ENCODE measurements at regions of chr9 and their contacts with region 1.

Region 1: GRCh38 chr9:128927731-128928411 is 7.1 kb downstream of the PHYHD1 start:
- DNase-seq: peak; percentile 61
- ATAC-seq: peak; percentile 92
- H3K4me3 Mint-ChIP-seq: no peak overlapping the region
- H3K27ac Mint-ChIP-seq: no peak overlapping the region
- H3K4me1 Mint-ChIP-seq: peaks cover 2% of the 10 kb centered on the region
- H3K27me3 Mint-ChIP-seq: no peaks in the 10 kb centered on the region
- CTCF ChIP-seq: peak; percentile 95

Region 2: GRCh38 chr9:128786681-128787601 is 140.9 kb before region 1 on chr9 and contains the start of gene TBC1D13:
- CTCF ChIA-PET with region 1: interaction called, 14 read pairs
- POLR2A ChIA-PET with region 1: no interaction called
- intact Hi-C with region 1: no loop called
- DNase-seq: peak; percentile 90
- ATAC-seq: peak; percentile 97
- H3K4me3 Mint-ChIP-seq: peak within 1 kb of the TSS; percentile 93
- H3K27ac Mint-ChIP-seq: peak within 1 kb of the TSS; percentile 85
- H3K4me1 Mint-ChIP-seq: peaks cover 20% of the 10 kb centered on the region
- H3K27me3 Mint-ChIP-seq: no peaks in the 10 kb centered on the region
- CTCF ChIP-seq: no peak
- total RNA-seq, gene TBC1D13: 11.7 to 12.5 TPM

Region 3: GRCh38 chr9:128845155-128845931 is 82.5 kb before region 1 on chr9:
- CTCF ChIA-PET with region 1: interaction called, 17 read pairs
- POLR2A ChIA-PET with region 1: interaction called, 3 read pairs
- intact Hi-C with region 1: no loop called
- DNase-seq: no peak
- ATAC-seq: no peak
- H3K4me3 Mint-ChIP-seq: no peak overlapping the region
- H3K27ac Mint-ChIP-seq: no peak overlapping the region
- H3K4me1 Mint-ChIP-seq: no peaks in the 10 kb centered on the region
- H3K27me3 Mint-ChIP-seq: no peaks in the 10 kb centered on the region
- CTCF ChIP-seq: no peak

Region 4: DNA sequence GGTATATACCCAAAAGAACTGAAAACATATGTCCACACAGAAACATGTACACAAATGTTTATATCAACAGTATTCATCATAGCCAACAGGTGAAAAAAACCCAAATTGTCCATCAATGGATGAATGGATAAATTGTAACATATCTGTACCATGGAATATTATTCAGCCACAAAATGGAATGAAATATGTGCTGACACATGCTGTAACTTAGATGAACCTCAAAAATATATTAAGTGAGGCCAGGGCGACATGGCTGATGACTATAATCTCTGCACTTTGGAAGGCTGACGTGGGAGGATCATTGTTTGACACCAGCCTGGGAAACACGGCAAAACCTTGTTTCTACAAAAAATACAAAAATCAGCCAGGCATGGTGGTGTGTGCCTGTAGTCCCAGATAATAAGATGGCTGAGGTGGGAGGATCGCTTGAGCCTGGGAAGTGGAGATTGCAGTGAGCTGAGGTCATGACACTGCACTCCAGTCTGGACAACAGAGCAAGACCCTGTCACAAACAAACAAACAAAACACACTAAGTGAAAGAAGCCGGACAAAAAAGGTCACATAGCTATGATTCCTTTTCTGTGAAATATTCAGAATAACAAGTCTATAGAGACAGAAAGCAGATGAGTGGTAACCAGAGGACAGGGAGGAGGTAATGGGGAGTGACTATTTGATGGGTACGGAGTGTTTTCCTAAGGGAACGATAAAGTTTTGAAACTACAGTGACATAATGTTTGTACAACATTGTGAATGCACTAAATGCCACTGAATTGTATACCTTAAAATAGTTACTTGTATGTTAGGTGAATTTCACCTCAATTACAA is 57.5 kb before region 1 on chr9:
- CTCF ChIA-PET with region 1: interaction called, 157 read pairs
- POLR2A ChIA-PET with region 1: no interaction called
- intact Hi-C with region 1: no loop called
- DNase-seq: no peak
- ATAC-seq: no peak
- H3K4me3 Mint-ChIP-seq: no peak overlapping the region
- H3K27ac Mint-ChIP-seq: no peak overlapping the region
- H3K4me1 Mint-ChIP-seq: peaks cover 5% of the 10 kb centered on the region
- H3K27me3 Mint-ChIP-seq: no peaks in the 10 kb centered on the region
- CTCF ChIP-seq: no peak

Region 5: GRCh38 chr9:128947422-128948301 is 19.8 kb after region 1 on chr9 and contains the starts of genes DOLK and NUP188:
- CTCF ChIA-PET with region 1: interaction called, 26 read pairs
- POLR2A ChIA-PET with region 1: interaction called, 3 read pairs
- intact Hi-C with region 1: no loop called
- DNase-seq: peak; percentile 98
- ATAC-seq: peak; percentile 82
- H3K4me3 Mint-ChIP-seq: peak within 1 kb of the TSS; percentile 82
- H3K27ac Mint-ChIP-seq: peak within 1 kb of the TSS; percentile 98
- H3K4me1 Mint-ChIP-seq: peaks cover 28% of the 10 kb centered on the region
- H3K27me3 Mint-ChIP-seq: no peaks in the 10 kb centered on the region
- CTCF ChIP-seq: no peak
- total RNA-seq, gene DOLK: 5.7 TPM
- total RNA-seq, gene NUP188: 96.2 to 110 TPM

Region 6: GRCh38 chr9:129139993-129140396 is 212.1 kb after region 1 on chr9:
- CTCF ChIA-PET with region 1: no interaction called
- POLR2A ChIA-PET with region 1: no interaction called
- intact Hi-C with region 1: no loop called
- DNase-seq: peak; percentile 92
- ATAC-seq: peak; percentile 91
- H3K4me3 Mint-ChIP-seq: peak overlapping the region; percentile 80
- H3K27ac Mint-ChIP-seq: peak overlapping the region; percentile 93
- H3K4me1 Mint-ChIP-seq: peaks cover 42% of the 10 kb centered on the region
- H3K27me3 Mint-ChIP-seq: no peaks in the 10 kb centered on the region
- CTCF ChIP-seq: no peak

Measured in activated CD8-positive, alpha-beta T cell treated with anti-CD3 and anti-CD28 coated beads for 36 hours (primary cell).